CD4-positive, alpha-beta T cell (primary cell): ENCODE measurements at regions of chr2 and their contacts with region 1.

Region 1: DNA sequence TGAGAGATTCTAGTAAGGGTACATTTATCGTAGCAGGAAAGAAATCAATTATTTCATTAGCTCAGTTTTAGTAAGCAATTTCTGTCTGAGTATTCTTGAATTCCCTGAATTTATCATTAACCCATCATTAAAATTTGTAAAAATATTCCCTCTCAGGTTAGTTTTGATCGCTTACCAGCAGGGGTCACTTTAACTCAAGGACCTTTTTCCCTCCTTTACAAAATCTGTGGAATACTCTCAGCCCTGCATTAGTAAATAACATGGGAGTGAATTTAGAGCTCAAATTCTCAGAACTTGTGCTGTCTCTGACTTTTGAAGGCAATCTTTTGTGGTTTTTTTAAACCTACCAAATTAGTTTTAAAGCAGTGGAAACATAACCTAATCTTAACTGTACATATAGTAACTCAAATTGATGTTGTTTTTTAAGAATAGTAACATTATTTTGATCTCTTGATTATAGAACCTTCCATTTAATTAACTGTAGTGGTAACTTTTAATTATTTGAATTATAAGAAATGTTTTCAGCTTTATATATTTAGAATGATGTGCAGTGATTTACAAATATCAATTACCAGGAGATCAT is 97.2 kb downstream of the AGPS start:
- DNase-seq: peak in 1 of 14 experiments; percentile 4
- ATAC-seq: no peak
- H3K4me3 ChIP-seq: no peak overlapping the region
- H3K4me3 Mint-ChIP-seq: no peak overlapping the region
- H3K27ac ChIP-seq: no peak overlapping the region
- H3K27ac Mint-ChIP-seq: no peak overlapping the region
- H3K4me1 ChIP-seq: no peaks in the 10 kb centered on the region
- H3K4me1 Mint-ChIP-seq: no peaks in the 10 kb centered on the region
- H3K27me3 ChIP-seq: no peaks in the 10 kb centered on the region
- H3K27me3 Mint-ChIP-seq: no peaks in the 10 kb centered on the region
- CTCF ChIP-seq: peak; percentile 52

Region 2: DNA sequence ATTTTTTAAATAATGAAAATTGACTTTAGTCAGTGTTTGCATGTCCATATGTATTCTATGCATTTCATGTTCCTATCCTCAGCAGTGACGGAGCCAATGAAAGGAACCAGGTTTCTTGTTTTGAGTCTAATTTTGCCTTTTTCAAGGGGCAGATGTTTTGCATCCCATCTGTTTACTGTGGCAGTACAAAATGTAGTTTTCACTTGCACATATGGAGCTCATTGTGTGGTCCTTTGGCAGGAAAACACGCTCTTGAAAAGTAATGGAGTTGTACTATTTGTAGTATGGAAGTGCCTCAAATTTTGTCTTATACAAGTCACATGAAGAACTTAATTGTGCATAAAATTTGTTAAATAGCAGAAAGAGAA is 30.5 kb after region 1 on chr2:
- CTCF ChIA-PET with region 1: no interaction called
- POLR2A ChIA-PET with region 1: no interaction called
- intact Hi-C with region 1: no loop called
- DNase-seq: no peak
- ATAC-seq: no peak
- H3K4me3 ChIP-seq: no peak overlapping the region
- H3K4me3 Mint-ChIP-seq: no peak overlapping the region
- H3K27ac ChIP-seq: no peak overlapping the region
- H3K27ac Mint-ChIP-seq: no peak overlapping the region
- H3K4me1 ChIP-seq: no peaks in the 10 kb centered on the region
- H3K4me1 Mint-ChIP-seq: no peaks in the 10 kb centered on the region
- H3K27me3 ChIP-seq: no peaks in the 10 kb centered on the region
- H3K27me3 Mint-ChIP-seq: no peaks in the 10 kb centered on the region
- CTCF ChIP-seq: no peak

Region 3: DNA sequence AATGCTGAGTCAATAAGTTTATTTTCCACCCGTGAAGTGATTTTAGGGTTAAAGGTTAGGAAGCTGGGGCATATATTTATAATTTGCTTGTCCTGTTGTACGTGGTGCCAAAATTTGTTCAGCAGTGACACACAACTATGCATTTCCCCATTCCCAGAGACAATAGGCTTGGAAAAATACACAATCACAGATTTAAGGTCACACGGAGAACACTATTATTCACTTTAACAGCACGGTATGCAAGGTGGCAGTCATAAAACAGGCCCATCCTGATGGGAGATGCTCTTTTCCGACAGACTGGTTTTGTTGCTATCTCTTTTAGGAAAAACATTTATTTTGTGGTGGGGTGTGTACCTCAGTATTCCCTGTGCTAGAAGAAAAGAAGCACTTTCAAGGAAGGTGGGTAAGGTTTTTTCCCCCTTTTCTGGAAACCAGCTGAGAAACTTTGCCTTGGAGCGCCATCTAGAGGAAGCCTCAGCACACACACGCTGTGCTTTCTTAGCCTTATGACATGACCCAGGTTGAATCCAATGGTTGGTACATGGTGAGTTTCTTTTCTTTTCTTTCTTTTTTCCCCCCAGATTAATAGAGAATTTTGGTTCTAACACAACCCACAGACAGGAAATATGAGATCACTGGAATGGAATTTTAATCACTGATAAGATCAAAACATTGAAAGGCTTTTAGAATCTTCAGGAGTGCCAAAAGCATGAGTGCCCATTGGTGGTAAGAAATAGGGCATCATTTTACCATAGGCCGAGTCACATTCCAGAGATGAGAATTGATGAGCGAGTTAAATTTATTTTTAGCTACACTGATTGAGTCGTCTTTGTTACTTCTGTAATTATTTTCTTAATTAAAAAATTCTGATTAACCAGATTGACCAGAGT is 234.8 kb after region 1 on chr2:
- CTCF ChIA-PET with region 1: no interaction called
- POLR2A ChIA-PET with region 1: no interaction called
- intact Hi-C with region 1: loop called (anchors 10 kb)
- DNase-seq: peak; percentile 3 to 60 (median 11)
- ATAC-seq: no peak
- H3K4me3 ChIP-seq: no peak overlapping the region
- H3K4me3 Mint-ChIP-seq: no peak overlapping the region
- H3K27ac ChIP-seq: no peak overlapping the region
- H3K27ac Mint-ChIP-seq: no peak overlapping the region
- H3K4me1 ChIP-seq: no peaks in the 10 kb centered on the region
- H3K4me1 Mint-ChIP-seq: no peaks in the 10 kb centered on the region
- H3K27me3 ChIP-seq: peaks cover 5 to 7% of the 10 kb centered on the region in 2 experiments
- H3K27me3 Mint-ChIP-seq: peaks cover 37% of the 10 kb centered on the region
- CTCF ChIP-seq: peak; percentile 69

Region 4: GRCh38 chr2:177763532-177764265 is 273.9 kb after region 1 on chr2:
- CTCF ChIA-PET with region 1: no interaction called
- POLR2A ChIA-PET with region 1: no interaction called
- intact Hi-C with region 1: loop called in 1 of 2 experiments (anchors 10 kb)
- DNase-seq: peak; percentile 59 to 85 (median 70)
- ATAC-seq: peak; percentile 98
- H3K4me3 ChIP-seq: no peak overlapping the region
- H3K4me3 Mint-ChIP-seq: no peak overlapping the region
- H3K27ac ChIP-seq: no peak overlapping the region
- H3K27ac Mint-ChIP-seq: no peak overlapping the region
- H3K4me1 ChIP-seq: peaks cover 6% of the 10 kb centered on the region
- H3K4me1 Mint-ChIP-seq: peaks cover 3% of the 10 kb centered on the region
- H3K27me3 ChIP-seq: no peaks in the 10 kb centered on the region
- H3K27me3 Mint-ChIP-seq: peaks cover 32% of the 10 kb centered on the region
- CTCF ChIP-seq: peak; percentile 87